ENCODE measurements at regions of chr19 and their contacts with region 1.

Region 1: GRCh38 chr19:40425450-40426287 is at the start of gene SERTAD1:
- DNase-seq: peak; percentile 100
- H3K4me3 Mint-ChIP-seq: peak within 1 kb of the TSS; percentile 88
- H3K27ac Mint-ChIP-seq: peak within 1 kb of the TSS; percentile 89
- H3K4me1 Mint-ChIP-seq: peaks cover 24% of the 10 kb centered on the region
- H3K27me3 Mint-ChIP-seq: no peaks in the 10 kb centered on the region
- total RNA-seq, gene SERTAD1: 10.6 to 10.7 TPM

Region 2: GRCh38 chr19:40210921-40211320 is 214.7 kb before region 1 on chr19:
- CTCF ChIA-PET with region 1: no interaction called
- POLR2A ChIA-PET with region 1: no interaction called
- DNase-seq: no peak
- H3K4me3 Mint-ChIP-seq: no peak overlapping the region
- H3K27ac Mint-ChIP-seq: no peak overlapping the region
- H3K4me1 Mint-ChIP-seq: no peaks in the 10 kb centered on the region
- H3K27me3 Mint-ChIP-seq: no peaks in the 10 kb centered on the region

Region 3: DNA sequence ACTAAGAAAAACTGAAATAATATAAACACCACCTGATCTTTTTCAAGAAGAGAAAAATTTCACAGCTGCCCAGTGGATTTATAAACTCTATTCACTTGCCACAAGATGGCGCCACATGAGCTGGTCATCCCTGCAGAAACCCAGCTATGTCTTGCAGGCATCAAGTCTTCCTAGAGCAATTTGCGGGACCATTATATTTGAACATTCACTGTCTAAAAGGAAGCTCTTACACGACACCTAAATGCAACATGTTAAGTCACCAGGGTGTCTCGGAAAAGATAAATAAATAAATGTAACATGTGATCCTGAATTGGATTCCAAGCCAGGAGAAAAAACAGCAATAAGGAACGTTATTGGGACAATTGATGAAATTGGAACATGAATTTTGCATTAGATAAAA is 120.3 kb before region 1 on chr19:
- CTCF ChIA-PET with region 1: interaction called, 18 read pairs
- POLR2A ChIA-PET with region 1: no interaction called
- DNase-seq: peak; percentile 83
- H3K4me3 Mint-ChIP-seq: no peak overlapping the region
- H3K27ac Mint-ChIP-seq: no peak overlapping the region
- H3K4me1 Mint-ChIP-seq: peaks cover 3% of the 10 kb centered on the region
- H3K27me3 Mint-ChIP-seq: no peaks in the 10 kb centered on the region

Region 4: GRCh38 chr19:40348125-40348913 is 77.3 kb before region 1 on chr19 and contains the starts of genes C19orf47 and PLD3:
- CTCF ChIA-PET with region 1: interaction called, 13 read pairs
- POLR2A ChIA-PET with region 1: interaction called, 13 read pairs
- DNase-seq: peak; percentile 99
- H3K4me3 Mint-ChIP-seq: peak within 1 kb of the TSS; percentile 84
- H3K27ac Mint-ChIP-seq: peak within 1 kb of the TSS; percentile 84
- H3K4me1 Mint-ChIP-seq: peaks cover 37% of the 10 kb centered on the region
- H3K27me3 Mint-ChIP-seq: no peaks in the 10 kb centered on the region
- total RNA-seq, gene C19orf47: 19.0 to 20.5 TPM
- total RNA-seq, gene PLD3: 92.4 to 100 TPM

Region 5: GRCh38 chr19:40403262-40403984 is 22.2 kb before region 1 on chr19:
- CTCF ChIA-PET with region 1: interaction called, 25 read pairs
- POLR2A ChIA-PET with region 1: interaction called, 15 read pairs
- DNase-seq: peak; percentile 89
- H3K4me3 Mint-ChIP-seq: peak overlapping the region; percentile 90
- H3K27ac Mint-ChIP-seq: peak overlapping the region; percentile 58
- H3K4me1 Mint-ChIP-seq: peaks cover 33% of the 10 kb centered on the region
- H3K27me3 Mint-ChIP-seq: peaks cover 3% of the 10 kb centered on the region

Region 6: GRCh38 chr19:40411125-40411842 is 14.4 kb before region 1 on chr19:
- CTCF ChIA-PET with region 1: interaction called, 16 read pairs
- POLR2A ChIA-PET with region 1: interaction called, 14 read pairs
- DNase-seq: no peak
- H3K4me3 Mint-ChIP-seq: no peak overlapping the region
- H3K27ac Mint-ChIP-seq: no peak overlapping the region
- H3K4me1 Mint-ChIP-seq: peaks cover 16% of the 10 kb centered on the region
- H3K27me3 Mint-ChIP-seq: peaks cover 1% of the 10 kb centered on the region

Region 7: DNA sequence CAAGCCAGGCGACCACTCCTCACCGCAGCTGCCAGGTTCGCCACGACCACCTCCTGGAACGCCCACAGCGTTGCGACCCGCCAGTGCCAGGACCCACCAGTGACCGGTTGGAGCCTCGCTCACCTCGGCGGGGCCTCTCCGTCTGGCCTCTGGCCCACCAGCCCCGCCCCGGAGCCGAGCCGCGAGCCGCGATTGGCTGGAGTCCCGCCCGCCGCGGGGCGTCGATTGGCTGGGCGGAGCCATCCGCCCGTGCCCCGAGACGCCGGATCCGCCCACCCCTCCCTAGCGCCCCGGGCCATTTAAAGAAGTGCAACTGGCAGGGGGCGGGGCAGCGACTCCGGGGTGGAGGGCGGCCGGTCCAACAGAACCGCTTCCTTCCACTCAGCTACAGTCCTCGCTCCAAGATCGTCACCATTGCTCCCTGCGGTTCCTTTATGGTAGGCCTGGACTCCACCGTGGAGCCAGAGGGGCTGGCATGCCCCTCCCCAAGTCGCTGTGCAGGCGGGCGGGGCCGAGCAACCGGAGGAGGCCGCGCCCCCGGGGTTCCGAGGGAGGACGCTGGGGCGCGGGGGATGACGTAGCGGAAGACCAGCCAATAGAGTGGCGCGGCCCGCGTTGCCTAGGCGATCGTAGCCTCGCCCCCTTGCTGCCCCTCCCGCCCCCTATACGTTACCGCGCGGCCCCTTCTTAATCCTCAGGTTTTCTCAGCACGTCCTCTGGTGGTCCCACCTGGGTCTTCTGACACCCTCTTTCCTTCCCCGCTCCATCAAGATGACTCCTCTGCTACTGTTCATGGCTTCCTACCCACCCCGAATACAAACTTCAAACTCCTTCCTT is 18.7 kb after region 1 on chr19 and contains the start of gene SERTAD3:
- CTCF ChIA-PET with region 1: interaction called, 25 read pairs
- POLR2A ChIA-PET with region 1: interaction called, 25 read pairs
- DNase-seq: peak; percentile 98
- H3K4me3 Mint-ChIP-seq: peak within 1 kb of the TSS; percentile 99
- H3K27ac Mint-ChIP-seq: peak within 1 kb of the TSS; percentile 97
- H3K4me1 Mint-ChIP-seq: peaks cover 21% of the 10 kb centered on the region
- H3K27me3 Mint-ChIP-seq: no peaks in the 10 kb centered on the region
- total RNA-seq, gene SERTAD3: 18.0 to 20.3 TPM

Measured in activated CD4-positive, alpha-beta memory T cell treated with anti-CD3 and anti-CD28 coated beads, Interleukin-2, amount 10 ng/mL, durations not matched to agents 7 days and 5 days (primary cell).